Left ventricle myocardium superior (tissue), 1 donor: ENCODE measurements at regions of chr4 and their contacts with region 1.

Region 1: DNA sequence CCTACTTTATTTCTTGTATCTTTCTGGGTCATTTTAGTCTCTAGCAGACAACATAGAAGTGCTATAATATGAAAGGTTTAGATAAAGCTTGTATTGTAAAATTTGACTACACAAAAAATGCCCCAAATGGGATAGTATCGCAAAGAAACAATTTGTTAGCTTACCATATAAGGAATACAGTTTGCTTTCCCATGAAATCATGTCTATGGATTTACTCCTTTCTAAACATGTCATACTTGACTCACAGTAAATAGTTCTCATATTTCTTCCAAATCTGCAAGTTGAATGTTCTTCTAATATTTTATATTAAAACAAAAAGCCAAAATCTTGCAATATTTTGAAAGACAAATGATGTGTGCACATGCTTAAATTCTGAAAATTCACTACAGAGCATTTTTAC is 103.9 kb downstream of the PPA2 start:
- DNase-seq: no peak
- ATAC-seq: no peak

Region 2: DNA sequence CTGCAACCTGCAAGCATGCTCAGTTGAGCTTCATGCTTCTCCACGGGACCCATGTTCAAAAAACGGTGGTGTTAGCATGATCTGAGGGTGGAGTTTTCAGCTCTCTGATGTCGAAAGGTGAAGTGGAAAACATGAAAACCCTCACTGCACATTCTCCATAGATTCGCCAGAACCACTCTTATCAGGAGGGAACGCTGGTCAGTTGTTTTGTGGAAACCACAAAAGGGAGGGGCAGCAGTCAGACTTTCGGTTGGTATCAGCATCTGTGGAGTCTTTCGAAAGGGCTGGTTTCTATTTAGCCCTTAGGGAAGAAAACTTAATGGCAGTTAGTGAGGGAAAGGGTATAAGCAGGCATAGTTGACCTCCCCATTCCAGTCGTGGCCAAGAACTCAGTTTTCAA is 91.2 kb after region 1 on chr4:
- intact Hi-C with region 1: loop called (anchors 10 kb)
- DNase-seq: no peak
- ATAC-seq: peak; percentile 39